ENCODE measurements at regions of chr4 and their contacts with region 1.

Region 1: GRCh38 chr4:20684852-20685763 is 15.2 kb upstream of the PACRGL start:
- DNase-seq: no peak
- H3K4me3 ChIP-seq: no peak overlapping the region
- H3K27ac ChIP-seq: no peak overlapping the region
- H3K4me1 ChIP-seq: peaks cover 0 to 30% (median 25%) of the 10 kb centered on the region in 4 donors
- H3K27me3 ChIP-seq: no peaks in the 10 kb centered on the region
- CTCF ChIP-seq: peak; percentile 54 to 67 (median 65)
- EP300 ChIP-seq: no peak
- POLR2A ChIP-seq: no peak

Region 2: DNA sequence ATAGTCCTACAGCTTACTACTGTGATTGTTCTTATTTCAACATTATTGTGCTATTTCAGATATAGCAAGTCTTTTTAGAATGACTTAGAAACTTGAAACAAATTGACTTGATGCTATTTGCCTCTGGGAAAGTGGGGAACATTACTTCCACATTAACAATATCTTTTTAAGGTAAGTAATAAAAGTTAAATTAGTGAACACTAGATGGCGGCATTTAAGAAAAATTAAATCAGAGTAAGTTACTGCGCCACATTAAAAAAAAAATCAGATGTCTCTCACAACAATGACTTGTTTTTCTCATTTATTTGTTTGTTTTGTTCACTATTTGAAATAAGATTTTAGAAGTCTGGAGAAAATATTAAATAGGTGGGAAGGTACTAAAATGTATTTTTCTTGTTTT is 1460.3 kb before region 1 on chr4:
- intact Hi-C with region 1: loop called (anchors 5 kb)
- DNase-seq: no peak
- H3K4me3 ChIP-seq: no peak overlapping the region
- H3K27ac ChIP-seq: no peak overlapping the region
- H3K4me1 ChIP-seq: no peaks in the 10 kb centered on the region
- H3K27me3 ChIP-seq: no peaks in the 10 kb centered on the region
- CTCF ChIP-seq: peak; percentile 24 to 44 (median 42)
- EP300 ChIP-seq: no peak
- POLR2A ChIP-seq: no peak

Region 3: GRCh38 chr4:20422398-20422797 is 262.7 kb before region 1 on chr4:
- intact Hi-C with region 1: loop called (anchors 5 kb)
- DNase-seq: no peak
- H3K4me3 ChIP-seq: no peak overlapping the region
- H3K27ac ChIP-seq: no peak overlapping the region
- H3K4me1 ChIP-seq: peaks cover 0 to 35% (median 15%) of the 10 kb centered on the region in 4 donors
- H3K27me3 ChIP-seq: no peaks in the 10 kb centered on the region
- CTCF ChIP-seq: peak in 2 of 3 experiments; percentile 52 to 61
- EP300 ChIP-seq: no peak
- POLR2A ChIP-seq: no peak

Region 4: DNA sequence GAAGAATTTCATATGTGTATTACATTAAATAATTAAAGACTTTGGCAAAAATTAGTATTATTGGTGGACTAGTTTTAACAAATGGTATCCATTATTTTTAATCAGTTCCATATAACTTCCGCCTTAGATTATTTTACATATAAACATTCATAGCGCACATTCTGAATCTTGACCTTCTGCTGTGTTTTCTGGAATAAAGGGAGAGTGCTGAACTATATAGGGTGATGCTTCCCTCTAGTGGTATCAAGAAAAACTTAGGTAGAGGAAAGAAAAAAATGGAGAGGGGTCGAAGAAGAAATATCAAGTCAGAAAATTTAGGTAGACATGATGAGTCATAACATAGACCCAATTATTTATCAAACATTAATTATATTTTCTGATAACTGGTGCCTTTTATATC is 140.5 kb before region 1 on chr4:
- intact Hi-C with region 1: loop called (anchors 10 kb)
- DNase-seq: no peak
- H3K4me3 ChIP-seq: no peak overlapping the region
- H3K27ac ChIP-seq: no peak overlapping the region
- H3K4me1 ChIP-seq: peaks cover 0 to 6% (median 5%) of the 10 kb centered on the region in 4 donors
- H3K27me3 ChIP-seq: no peaks in the 10 kb centered on the region
- CTCF ChIP-seq: peak; percentile 54 to 61 (median 60)
- EP300 ChIP-seq: no peak
- POLR2A ChIP-seq: no peak